Colonic mucosa (tissue), 4 donors: ENCODE measurements at regions of chr16 and their contacts with region 1.

Region 1: GRCh38 chr16:88437373-88437964 is 15.6 kb upstream of the ZFPM1 start:
- DNase-seq: peak; percentile 67
- H3K4me3 ChIP-seq: no peak overlapping the region
- H3K27ac ChIP-seq: no peak overlapping the region
- H3K4me1 ChIP-seq: no peaks in the 10 kb centered on the region
- H3K27me3 ChIP-seq: no peaks in the 10 kb centered on the region
- CTCF ChIP-seq: peak; percentile 91

Region 2: GRCh38 chr16:87970186-87970585 is 467.3 kb before region 1 on chr16:
- intact Hi-C with region 1: loop called (anchors 5 kb)
- DNase-seq: no peak
- H3K4me3 ChIP-seq: no peak overlapping the region
- H3K27ac ChIP-seq: no peak overlapping the region
- H3K4me1 ChIP-seq: peaks cover 5% of the 10 kb centered on the region
- H3K27me3 ChIP-seq: no peaks in the 10 kb centered on the region
- CTCF ChIP-seq: no peak

Region 3: DNA sequence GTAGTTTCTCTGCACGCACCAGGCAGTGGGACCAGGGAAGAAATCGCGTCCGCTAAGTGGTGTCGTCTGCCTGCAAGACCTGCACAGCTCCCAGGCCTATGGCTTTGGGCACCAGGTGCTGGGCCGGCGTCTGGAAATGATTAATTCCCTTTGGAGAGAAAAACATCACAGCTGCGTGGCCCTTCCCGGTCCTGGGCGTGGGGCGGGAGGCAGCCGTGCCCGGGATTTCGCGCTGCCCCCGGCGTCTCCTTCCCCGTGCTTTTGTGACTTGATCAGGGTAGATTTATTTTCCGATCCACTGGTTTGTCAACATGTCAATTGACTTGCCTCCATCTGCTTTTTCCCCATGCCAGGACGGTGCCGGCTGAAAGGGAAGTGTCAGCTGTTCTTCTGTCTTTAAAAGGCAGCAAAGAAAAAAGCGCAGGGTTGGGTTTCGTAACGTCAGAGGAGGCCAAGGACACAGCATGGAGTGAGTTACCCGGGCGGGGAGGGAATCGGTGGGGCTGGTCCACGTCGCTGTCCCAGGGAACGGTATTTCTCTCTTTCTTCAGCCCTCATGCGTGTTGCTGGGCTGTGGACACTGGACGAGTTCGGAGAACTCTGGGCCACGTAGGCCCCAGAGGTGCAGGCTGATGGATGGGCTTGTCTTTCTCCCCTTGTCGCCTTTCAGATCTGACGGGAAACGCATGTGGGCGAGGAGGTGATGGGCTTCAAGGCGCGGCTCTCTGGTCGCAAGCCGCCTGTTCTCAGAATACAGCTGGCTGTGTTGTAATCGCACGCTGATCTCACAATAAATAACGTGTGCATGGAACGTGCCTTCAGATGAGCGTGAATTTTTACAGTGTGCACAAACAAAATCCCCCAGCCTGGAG is 242.8 kb before region 1 on chr16:
- intact Hi-C with region 1: loop called (anchors 10 kb)
- DNase-seq: peak; percentile 27
- H3K4me3 ChIP-seq: no peak overlapping the region
- H3K27ac ChIP-seq: no peak overlapping the region
- H3K4me1 ChIP-seq: no peaks in the 10 kb centered on the region
- H3K27me3 ChIP-seq: no peaks in the 10 kb centered on the region
- CTCF ChIP-seq: peak; percentile 0

Region 4: DNA sequence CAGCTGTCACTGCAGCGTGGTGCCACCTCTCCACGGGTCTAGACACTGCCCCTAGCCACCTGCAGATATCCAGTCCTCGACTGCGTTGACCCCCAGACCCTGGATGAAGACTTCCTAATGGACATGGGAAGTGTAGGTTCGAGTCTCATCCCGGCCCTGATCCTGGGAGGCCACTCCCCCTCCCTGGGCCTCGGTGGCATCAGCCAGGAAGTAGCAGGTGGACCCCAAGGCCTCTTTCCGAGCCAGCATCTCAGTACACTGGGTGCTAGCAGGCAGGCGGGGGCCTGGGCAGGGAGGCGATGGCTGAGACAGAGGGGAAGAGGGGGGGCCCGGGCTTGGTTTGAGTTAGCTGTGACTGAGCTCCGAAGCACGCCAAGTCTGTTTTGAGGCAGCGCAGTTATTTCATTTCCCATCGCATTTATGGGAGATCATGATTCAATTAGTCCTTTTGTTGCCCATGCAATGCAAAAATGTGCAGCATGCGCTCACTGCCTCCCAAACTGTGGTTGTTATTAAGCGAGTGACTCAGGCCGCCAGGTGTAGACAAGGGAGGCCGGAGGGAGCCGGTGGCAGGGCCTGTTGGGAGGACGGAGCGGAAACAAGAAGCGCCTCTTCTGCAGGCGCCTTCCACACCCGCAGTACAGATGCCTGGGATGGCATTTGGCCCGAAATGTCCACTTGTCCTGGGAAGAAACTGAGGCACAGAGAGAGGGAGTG is 80.0 kb before region 1 on chr16:
- intact Hi-C with region 1: no loop called
- DNase-seq: no peak
- H3K4me3 ChIP-seq: no peak overlapping the region
- H3K27ac ChIP-seq: no peak overlapping the region
- H3K4me1 ChIP-seq: no peaks in the 10 kb centered on the region
- H3K27me3 ChIP-seq: no peaks in the 10 kb centered on the region
- CTCF ChIP-seq: no peak